CD4-positive, alpha-beta memory T cell (primary cell): ENCODE measurements at regions of chr1 and their contacts with region 1.

Region 1: GRCh38 chr1:10032590-10033358 is at the start of gene UBE4B:
- DNase-seq: peak; percentile 99 to 100 (median 99)
- H3K4me3 ChIP-seq: peak within 1 kb of the TSS; percentile 92 to 96
- H3K4me3 Mint-ChIP-seq: peak within 1 kb of the TSS; percentile 93 to 98 (median 95)
- H3K27ac ChIP-seq: peak within 1 kb of the TSS; percentile 84
- H3K27ac Mint-ChIP-seq: peak within 1 kb of the TSS; percentile 92 to 98 (median 97)
- H3K4me1 ChIP-seq: peaks cover 22% of the 10 kb centered on the region
- H3K4me1 Mint-ChIP-seq: peaks cover 15 to 32% (median 25%) of the 10 kb centered on the region in 4 donors
- H3K27me3 ChIP-seq: no peaks in the 10 kb centered on the region
- H3K27me3 Mint-ChIP-seq: peaks cover 0 to 1% of the 10 kb centered on the region in 2 donors
- total RNA-seq, gene UBE4B: 44.1 to 47.6 TPM

Region 2: GRCh38 chr1:9588551-9589143 is 444.1 kb before region 1 on chr1 and contains the start of gene TMEM201:
- CTCF ChIA-PET with region 1: no interaction called
- POLR2A ChIA-PET with region 1: no interaction called
- intact Hi-C with region 1: loop called (anchors 5 kb)
- DNase-seq: peak; percentile 88 to 95 (median 94)
- H3K4me3 ChIP-seq: peak within 1 kb of the TSS in 1 of 2 donors; percentile 57
- H3K4me3 Mint-ChIP-seq: peak within 1 kb of the TSS; percentile 84 to 91 (median 86)
- H3K27ac ChIP-seq: peak within 1 kb of the TSS; percentile 47
- H3K27ac Mint-ChIP-seq: peak within 1 kb of the TSS; percentile 73 to 87 (median 82)
- H3K4me1 ChIP-seq: peaks cover 39% of the 10 kb centered on the region
- H3K4me1 Mint-ChIP-seq: peaks cover 14 to 47% (median 25%) of the 10 kb centered on the region in 4 donors
- H3K27me3 ChIP-seq: no peaks in the 10 kb centered on the region
- H3K27me3 Mint-ChIP-seq: no peaks in the 10 kb centered on the region
- total RNA-seq, gene TMEM201: 11.2 to 12.9 TPM

Region 3: GRCh38 chr1:9823943-9824701 is 208.7 kb before region 1 on chr1 and contains the start of gene CLSTN1:
- CTCF ChIA-PET with region 1: no interaction called
- POLR2A ChIA-PET with region 1: no interaction called
- intact Hi-C with region 1: loop called (anchors 2 kb)
- DNase-seq: peak; percentile 85 to 92 (median 86)
- H3K4me3 ChIP-seq: peak within 1 kb of the TSS; percentile 73 to 76
- H3K4me3 Mint-ChIP-seq: peak within 1 kb of the TSS; percentile 94 to 99 (median 97)
- H3K27ac ChIP-seq: peak within 1 kb of the TSS; percentile 55
- H3K27ac Mint-ChIP-seq: peak within 1 kb of the TSS; percentile 90 to 97 (median 96)
- H3K4me1 ChIP-seq: peaks cover 55% of the 10 kb centered on the region
- H3K4me1 Mint-ChIP-seq: peaks cover 25 to 68% (median 41%) of the 10 kb centered on the region in 4 donors
- H3K27me3 ChIP-seq: no peaks in the 10 kb centered on the region
- H3K27me3 Mint-ChIP-seq: no peaks in the 10 kb centered on the region
- total RNA-seq, gene CLSTN1: 107 to 109 TPM

Region 4: GRCh38 chr1:9874959-9875635 is 157.7 kb before region 1 on chr1:
- CTCF ChIA-PET with region 1: interaction called, 7 read pairs
- POLR2A ChIA-PET with region 1: no interaction called
- intact Hi-C with region 1: loop called (anchors 1 kb)
- DNase-seq: peak; percentile 65 to 72 (median 66)
- H3K4me3 ChIP-seq: no peak overlapping the region
- H3K4me3 Mint-ChIP-seq: peak overlapping the region in 1 of 8 donors; percentile 31
- H3K27ac ChIP-seq: no peak overlapping the region
- H3K27ac Mint-ChIP-seq: peak overlapping the region in 4 of 7 donors; percentile 18 to 36 (median 32)
- H3K4me1 ChIP-seq: no peaks in the 10 kb centered on the region
- H3K4me1 Mint-ChIP-seq: peaks cover 0 to 5% (median 3%) of the 10 kb centered on the region in 4 donors
- H3K27me3 ChIP-seq: no peaks in the 10 kb centered on the region
- H3K27me3 Mint-ChIP-seq: no peaks in the 10 kb centered on the region

Region 5: GRCh38 chr1:9910425-9911178 is 122.2 kb before region 1 on chr1:
- CTCF ChIA-PET with region 1: interaction called, 3 read pairs
- POLR2A ChIA-PET with region 1: interaction called, 4 read pairs
- intact Hi-C with region 1: loop called (anchors 1 kb)
- DNase-seq: peak; percentile 100
- H3K4me3 ChIP-seq: peak overlapping the region; percentile 71 to 78
- H3K4me3 Mint-ChIP-seq: peak overlapping the region; percentile 92 to 99 (median 96)
- H3K27ac ChIP-seq: peak overlapping the region; percentile 64
- H3K27ac Mint-ChIP-seq: peak overlapping the region; percentile 85 to 99 (median 98)
- H3K4me1 ChIP-seq: peaks cover 16% of the 10 kb centered on the region
- H3K4me1 Mint-ChIP-seq: peaks cover 27 to 39% (median 34%) of the 10 kb centered on the region in 4 donors
- H3K27me3 ChIP-seq: no peaks in the 10 kb centered on the region
- H3K27me3 Mint-ChIP-seq: no peaks in the 10 kb centered on the region

Region 6: DNA sequence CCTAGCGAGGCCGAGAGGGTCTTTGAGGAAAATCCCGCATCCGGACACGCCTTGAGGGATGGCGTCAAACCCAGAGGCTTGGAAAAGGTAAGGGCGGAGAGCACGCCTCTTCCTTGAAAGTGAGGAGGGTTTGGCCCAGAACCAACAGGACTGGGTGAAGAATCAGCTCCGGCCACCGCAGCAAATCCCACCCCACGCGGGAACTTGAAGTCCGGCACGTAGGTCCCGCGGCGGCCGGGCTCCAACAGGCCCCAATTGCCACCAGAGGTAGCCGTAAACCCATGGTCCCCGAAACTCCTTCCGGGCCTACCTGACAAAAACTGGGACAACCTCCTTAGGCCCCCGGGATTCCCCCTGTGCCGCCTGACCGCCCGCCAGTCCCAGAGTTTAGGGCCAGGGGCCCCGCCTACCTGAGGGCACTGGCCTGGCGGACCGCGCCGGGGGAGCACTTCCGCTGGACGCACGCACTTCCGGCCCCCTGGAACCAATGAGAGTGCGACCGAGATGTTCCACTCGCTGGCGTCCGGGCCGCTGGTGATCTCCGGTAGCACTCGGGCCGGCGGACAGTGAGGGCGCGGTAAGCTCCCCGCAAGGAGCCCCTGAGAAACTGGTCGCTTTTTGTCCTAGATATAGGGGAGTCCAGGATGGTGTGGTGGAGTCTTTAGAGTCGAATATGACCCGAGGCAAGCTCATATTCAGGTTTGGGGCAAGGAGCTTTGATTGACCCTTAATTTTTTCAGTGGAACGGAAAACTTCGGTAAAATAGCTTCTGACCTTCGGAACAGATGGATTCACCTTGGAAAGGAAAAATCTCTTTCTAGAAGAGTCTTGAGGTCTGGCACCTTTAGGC is 89.6 kb before region 1 on chr1 and contains the starts of genes LZIC and NMNAT1:
- CTCF ChIA-PET with region 1: interaction called, 10 read pairs
- POLR2A ChIA-PET with region 1: interaction called, 3 read pairs
- intact Hi-C with region 1: loop called (anchors 2 kb)
- DNase-seq: peak; percentile 84 to 90 (median 85)
- H3K4me3 ChIP-seq: peak within 1 kb of the TSS; percentile 91 to 100
- H3K4me3 Mint-ChIP-seq: peak within 1 kb of the TSS; percentile 94 to 97 (median 97)
- H3K27ac ChIP-seq: peak within 1 kb of the TSS; percentile 92
- H3K27ac Mint-ChIP-seq: peak within 1 kb of the TSS; percentile 89 to 99 (median 98)
- H3K4me1 ChIP-seq: peaks cover 18% of the 10 kb centered on the region
- H3K4me1 Mint-ChIP-seq: peaks cover 11 to 35% (median 21%) of the 10 kb centered on the region in 4 donors
- H3K27me3 ChIP-seq: no peaks in the 10 kb centered on the region
- H3K27me3 Mint-ChIP-seq: no peaks in the 10 kb centered on the region
- total RNA-seq, gene LZIC: 34.0 to 34.8 TPM
- total RNA-seq, gene NMNAT1: 6.1 to 6.7 TPM

Region 7: GRCh38 chr1:10472220-10473144 is 439.7 kb after region 1 on chr1 and contains the start of gene DFFA:
- CTCF ChIA-PET with region 1: no interaction called
- POLR2A ChIA-PET with region 1: no interaction called
- intact Hi-C with region 1: loop called (anchors 2 kb)
- DNase-seq: peak; percentile 86 to 96 (median 88)
- H3K4me3 ChIP-seq: peak within 1 kb of the TSS; percentile 64 to 84
- H3K4me3 Mint-ChIP-seq: peak within 1 kb of the TSS; percentile 91 to 95 (median 92)
- H3K27ac ChIP-seq: peak within 1 kb of the TSS; percentile 68
- H3K27ac Mint-ChIP-seq: peak within 1 kb of the TSS; percentile 83 to 94 (median 89)
- H3K4me1 ChIP-seq: peaks cover 50% of the 10 kb centered on the region
- H3K4me1 Mint-ChIP-seq: peaks cover 32 to 53% (median 43%) of the 10 kb centered on the region in 4 donors
- H3K27me3 ChIP-seq: no peaks in the 10 kb centered on the region
- H3K27me3 Mint-ChIP-seq: no peaks in the 10 kb centered on the region
- total RNA-seq, gene DFFA: 22.4 to 25.3 TPM